Naive thymus-derived CD4-positive, alpha-beta T cell (primary cell): ENCODE measurements at regions of chr20 and their contacts with region 1.

Region 1: GRCh38 chr20:50115591-50116372 is 2.8 kb upstream of the UBE2V1 start:
- DNase-seq: peak; percentile 69 to 91 (median 87)
- ATAC-seq: peak; percentile 90
- H3K4me3 ChIP-seq: peak overlapping the region; percentile 58
- H3K4me3 Mint-ChIP-seq: peak overlapping the region; percentile 78 to 97 (median 90)
- H3K27ac ChIP-seq: peak overlapping the region; percentile 76
- H3K27ac Mint-ChIP-seq: peak overlapping the region; percentile 70 to 98 (median 92)
- H3K4me1 ChIP-seq: peaks cover 38 to 39% of the 10 kb centered on the region in 2 donors
- H3K4me1 Mint-ChIP-seq: peaks cover 37 to 55% (median 51%) of the 10 kb centered on the region in 7 donors
- H3K27me3 ChIP-seq: no peaks in the 10 kb centered on the region
- H3K27me3 Mint-ChIP-seq: no peaks in the 10 kb centered on the region

Region 2: DNA sequence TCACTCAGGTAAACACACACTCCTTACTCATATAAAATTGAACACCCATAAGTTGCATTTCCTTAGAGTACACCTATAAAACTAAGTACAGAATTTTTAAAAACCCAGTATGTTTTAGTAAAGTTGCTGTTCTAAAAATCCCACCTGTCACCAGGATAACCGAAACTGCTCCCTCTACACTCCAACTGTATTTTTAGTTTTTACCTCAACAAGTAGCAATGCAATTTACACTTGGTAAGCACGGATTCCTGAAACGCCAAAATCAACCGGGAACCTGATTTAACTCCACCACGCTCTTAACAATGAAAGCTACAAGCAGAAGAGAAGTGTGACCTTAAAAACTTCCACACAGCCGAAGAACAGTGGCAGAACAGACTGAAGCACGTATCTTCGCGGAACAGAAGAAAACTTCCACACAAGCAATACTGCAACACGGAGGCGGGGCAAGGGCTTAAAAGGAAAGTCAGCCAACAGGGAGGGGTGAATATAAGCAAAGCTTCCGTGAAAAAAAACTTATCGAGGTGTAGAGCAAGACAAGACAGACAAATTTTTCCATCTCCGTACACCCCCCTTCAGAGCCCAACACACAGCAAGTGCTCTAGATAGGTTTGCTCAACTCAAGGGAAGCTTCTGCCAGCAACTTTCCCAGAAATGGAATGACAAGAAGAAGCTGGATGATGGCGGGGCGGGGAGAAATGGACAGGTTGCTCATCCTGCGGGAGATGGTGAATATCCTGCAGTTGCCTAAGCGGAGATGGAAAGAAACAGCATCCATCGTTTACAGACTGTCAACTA is 929.0 kb before region 1 on chr20:
- CTCF ChIA-PET with region 1: no interaction called
- POLR2A ChIA-PET with region 1: no interaction called
- intact Hi-C with region 1: loop called in 1 of 2 experiments (anchors 5 kb)
- DNase-seq: peak; percentile 17 to 85 (median 73)
- ATAC-seq: peak; percentile 33
- H3K4me3 ChIP-seq: peak overlapping the region; percentile 88
- H3K4me3 Mint-ChIP-seq: peak overlapping the region; percentile 88 to 100 (median 94)
- H3K27ac ChIP-seq: peak overlapping the region; percentile 97
- H3K27ac Mint-ChIP-seq: peak overlapping the region; percentile 70 to 96 (median 93)
- H3K4me1 ChIP-seq: peaks cover 18% of the 10 kb centered on the region in 2 donors
- H3K4me1 Mint-ChIP-seq: peaks cover 38 to 56% (median 50%) of the 10 kb centered on the region in 7 donors
- H3K27me3 ChIP-seq: no peaks in the 10 kb centered on the region
- H3K27me3 Mint-ChIP-seq: peaks cover 0 to 7% (median 0%) of the 10 kb centered on the region in 5 donors

Region 3: GRCh38 chr20:49936153-49937027 is 179.4 kb before region 1 on chr20 and contains the start of gene RNF114:
- CTCF ChIA-PET with region 1: no interaction called
- POLR2A ChIA-PET with region 1: interaction called, 4 read pairs
- intact Hi-C with region 1: loop called in 1 of 2 experiments (anchors 1 kb)
- DNase-seq: peak; percentile 79 to 92 (median 86)
- ATAC-seq: peak; percentile 99
- H3K4me3 ChIP-seq: peak within 1 kb of the TSS; percentile 90
- H3K4me3 Mint-ChIP-seq: peak within 1 kb of the TSS; percentile 95 to 100 (median 98)
- H3K27ac ChIP-seq: peak within 1 kb of the TSS; percentile 95
- H3K27ac Mint-ChIP-seq: peak within 1 kb of the TSS; percentile 83 to 98 (median 95)
- H3K4me1 ChIP-seq: peaks cover 20 to 27% of the 10 kb centered on the region in 2 donors
- H3K4me1 Mint-ChIP-seq: peaks cover 36 to 61% (median 53%) of the 10 kb centered on the region in 7 donors
- H3K27me3 ChIP-seq: no peaks in the 10 kb centered on the region
- H3K27me3 Mint-ChIP-seq: no peaks in the 10 kb centered on the region
- total RNA-seq, gene RNF114: 67.1 to 113 (median 101) TPM

Region 4: GRCh38 chr20:50146732-50147662 is 31.2 kb after region 1 on chr20:
- CTCF ChIA-PET with region 1: interaction called, 41 read pairs
- POLR2A ChIA-PET with region 1: interaction called, 131 read pairs
- intact Hi-C with region 1: loop called (anchors 1 kb)
- DNase-seq: peak; percentile 50 to 90 (median 85)
- ATAC-seq: peak; percentile 97
- H3K4me3 ChIP-seq: peak overlapping the region; percentile 44
- H3K4me3 Mint-ChIP-seq: peak overlapping the region; percentile 79 to 88 (median 85)
- H3K27ac ChIP-seq: peak overlapping the region; percentile 85
- H3K27ac Mint-ChIP-seq: peak overlapping the region; percentile 96 to 99 (median 98)
- H3K4me1 ChIP-seq: peaks cover 31 to 40% of the 10 kb centered on the region in 2 donors
- H3K4me1 Mint-ChIP-seq: peaks cover 59 to 77% (median 70%) of the 10 kb centered on the region in 7 donors
- H3K27me3 ChIP-seq: no peaks in the 10 kb centered on the region
- H3K27me3 Mint-ChIP-seq: no peaks in the 10 kb centered on the region

Region 5: GRCh38 chr20:50460460-50461267 is 344.9 kb after region 1 on chr20:
- CTCF ChIA-PET with region 1: interaction called, 3 read pairs
- POLR2A ChIA-PET with region 1: no interaction called
- intact Hi-C with region 1: loop called (anchors 5 to 10 kb)
- DNase-seq: peak; percentile 54 to 87 (median 74)
- ATAC-seq: peak; percentile 95
- H3K4me3 ChIP-seq: no peak overlapping the region
- H3K4me3 Mint-ChIP-seq: no peak overlapping the region
- H3K27ac ChIP-seq: no peak overlapping the region
- H3K27ac Mint-ChIP-seq: peak overlapping the region in 1 of 9 donors; percentile 65
- H3K4me1 ChIP-seq: no peaks in the 10 kb centered on the region
- H3K4me1 Mint-ChIP-seq: peaks cover 0 to 18% (median 4%) of the 10 kb centered on the region in 7 donors
- H3K27me3 ChIP-seq: no peaks in the 10 kb centered on the region
- H3K27me3 Mint-ChIP-seq: peaks cover 5 to 14% (median 7%) of the 10 kb centered on the region in 5 donors

Region 6: DNA sequence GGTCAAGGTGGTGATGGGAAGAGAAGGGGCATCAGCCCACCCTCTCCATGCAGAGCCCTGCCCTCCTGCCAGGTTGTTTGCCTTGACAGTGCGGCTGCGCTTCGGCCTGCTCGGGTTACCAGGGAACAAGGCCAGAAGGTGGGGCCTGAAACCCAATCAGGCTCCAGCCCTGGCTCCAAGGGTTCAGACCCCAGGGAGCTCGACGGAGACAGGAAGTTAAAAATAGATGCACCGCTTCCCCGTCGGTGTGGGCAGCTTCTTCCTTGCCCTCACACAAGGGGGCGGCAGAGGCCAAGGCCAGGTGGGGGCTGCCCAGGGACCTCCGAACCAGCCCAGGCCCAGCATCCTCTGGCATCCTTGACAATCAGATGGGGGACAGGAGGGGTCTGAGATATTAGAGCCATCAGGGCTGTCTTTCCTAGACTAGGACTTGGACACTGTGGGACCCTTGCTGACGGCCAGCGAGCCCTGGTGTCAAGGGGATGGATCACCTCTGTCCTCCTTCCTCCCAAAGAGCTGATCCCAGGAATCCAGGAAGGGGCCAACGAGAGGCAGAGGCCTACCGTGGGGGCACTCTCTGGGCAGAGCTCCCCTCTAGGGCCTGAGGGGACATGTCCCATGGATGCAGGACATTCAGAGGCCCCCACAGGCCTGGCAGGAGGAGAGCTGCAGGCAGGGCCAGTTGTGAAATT is 510.4 kb after region 1 on chr20:
- CTCF ChIA-PET with region 1: no interaction called
- POLR2A ChIA-PET with region 1: no interaction called
- intact Hi-C with region 1: no loop called
- DNase-seq: no peak
- ATAC-seq: no peak
- H3K4me3 ChIP-seq: no peak overlapping the region
- H3K4me3 Mint-ChIP-seq: no peak overlapping the region
- H3K27ac ChIP-seq: no peak overlapping the region
- H3K27ac Mint-ChIP-seq: no peak overlapping the region
- H3K4me1 ChIP-seq: no peaks in the 10 kb centered on the region
- H3K4me1 Mint-ChIP-seq: no peaks in the 10 kb centered on the region
- H3K27me3 ChIP-seq: no peaks in the 10 kb centered on the region
- H3K27me3 Mint-ChIP-seq: no peaks in the 10 kb centered on the region

Region 7: DNA sequence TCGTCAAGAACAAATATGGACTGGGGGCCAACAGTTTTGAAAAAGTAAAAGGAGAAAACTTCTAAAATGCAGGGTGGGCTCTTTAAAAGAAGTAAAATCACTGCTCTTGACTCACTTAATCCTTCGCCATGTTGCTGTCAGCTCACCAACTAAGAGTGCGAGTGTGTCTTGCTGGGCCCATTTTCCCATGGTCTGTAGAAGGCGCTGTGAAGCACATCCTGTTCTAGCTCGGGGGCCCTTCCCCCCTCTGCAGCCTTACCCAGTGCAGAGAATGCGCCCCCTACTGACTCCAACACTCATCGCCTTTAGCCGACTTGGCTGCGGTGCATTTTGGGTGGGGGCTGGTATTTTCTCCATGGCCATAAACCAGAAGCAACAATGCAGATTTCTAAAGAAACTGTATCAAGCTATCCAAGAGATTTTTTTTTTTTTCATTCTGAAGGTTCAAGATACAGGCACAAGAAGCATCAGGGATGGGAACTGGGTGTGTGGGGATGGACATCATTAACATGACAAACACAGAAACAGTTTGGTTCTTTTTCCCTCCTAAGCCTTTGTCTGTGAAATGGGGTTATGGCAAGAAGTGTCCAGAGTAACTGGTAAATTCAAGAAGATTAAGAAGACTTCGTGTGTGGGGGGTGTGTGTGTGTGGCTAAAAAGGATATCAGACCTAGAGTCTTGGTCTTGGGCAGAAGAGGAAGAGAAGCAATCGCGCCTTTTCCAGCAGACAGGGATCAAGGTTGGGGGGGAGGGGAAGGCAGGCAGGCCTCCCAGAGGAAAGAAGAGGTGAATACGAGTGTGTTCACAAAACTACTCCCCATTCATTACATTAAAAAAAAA is 813.7 kb after region 1 on chr20:
- CTCF ChIA-PET with region 1: no interaction called
- POLR2A ChIA-PET with region 1: no interaction called
- intact Hi-C with region 1: loop called in 1 of 2 experiments (anchors 10 kb)
- DNase-seq: peak; percentile 74 to 95 (median 93)
- ATAC-seq: peak; percentile 84
- H3K4me3 ChIP-seq: peak overlapping the region; percentile 52
- H3K4me3 Mint-ChIP-seq: peak overlapping the region; percentile 88 to 98 (median 94)
- H3K27ac ChIP-seq: peak overlapping the region; percentile 63
- H3K27ac Mint-ChIP-seq: peak overlapping the region; percentile 85 to 99 (median 96)
- H3K4me1 ChIP-seq: peaks cover 37 to 38% of the 10 kb centered on the region in 2 donors
- H3K4me1 Mint-ChIP-seq: peaks cover 37 to 62% (median 57%) of the 10 kb centered on the region in 7 donors
- H3K27me3 ChIP-seq: no peaks in the 10 kb centered on the region
- H3K27me3 Mint-ChIP-seq: no peaks in the 10 kb centered on the region